Activated B cell treated with CpG ODN at 0.5 μM for 24 hours (primary cell): ENCODE measurements at regions of chr4 and their contacts with region 1.

Region 1: GRCh38 chr4:174483792-174484191 is 38.5 kb downstream of the HPGD start:
- DNase-seq: no peak
- ATAC-seq: no peak
- H3K4me3 Mint-ChIP-seq: no peak overlapping the region
- H3K27ac Mint-ChIP-seq: no peak overlapping the region
- H3K4me1 Mint-ChIP-seq: no peaks in the 10 kb centered on the region
- H3K27me3 Mint-ChIP-seq: no peaks in the 10 kb centered on the region
- CTCF ChIP-seq: no peak

Region 2: DNA sequence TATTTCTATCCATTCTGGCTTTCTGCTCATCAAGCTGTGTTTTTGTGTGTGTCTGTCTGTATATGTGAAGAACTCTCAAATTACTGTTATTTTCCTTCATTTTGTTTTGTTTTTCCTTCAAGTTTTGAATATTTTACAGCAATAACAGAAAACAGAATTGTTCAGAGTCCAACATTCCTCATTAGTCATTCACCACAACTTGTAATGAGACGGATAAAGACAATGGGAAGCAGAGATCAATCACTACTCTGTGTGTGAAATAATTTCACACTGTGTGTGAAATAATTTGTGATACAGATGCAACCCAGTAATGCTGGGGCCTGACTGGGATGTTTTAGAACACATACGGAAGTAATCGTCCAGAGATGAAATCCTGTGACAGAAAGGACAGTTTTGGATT is 16.7 kb before region 1 on chr4:
- CTCF ChIA-PET with region 1: no interaction called
- POLR2A ChIA-PET with region 1: no interaction called
- intact Hi-C with region 1: no loop called
- DNase-seq: no peak
- ATAC-seq: no peak
- H3K4me3 Mint-ChIP-seq: no peak overlapping the region
- H3K27ac Mint-ChIP-seq: no peak overlapping the region
- H3K4me1 Mint-ChIP-seq: no peaks in the 10 kb centered on the region
- H3K27me3 Mint-ChIP-seq: no peaks in the 10 kb centered on the region
- CTCF ChIP-seq: no peak

Region 3: GRCh38 chr4:174631901-174632758 is 148.3 kb after region 1 on chr4:
- CTCF ChIA-PET with region 1: no interaction called
- POLR2A ChIA-PET with region 1: no interaction called
- intact Hi-C with region 1: loop called (anchors 5 kb)
- DNase-seq: no peak
- ATAC-seq: no peak
- H3K4me3 Mint-ChIP-seq: no peak overlapping the region
- H3K27ac Mint-ChIP-seq: no peak overlapping the region
- H3K4me1 Mint-ChIP-seq: peaks cover 2% of the 10 kb centered on the region
- H3K27me3 Mint-ChIP-seq: no peaks in the 10 kb centered on the region
- CTCF ChIP-seq: no peak